Breast epithelium (tissue), 4 donors: ENCODE measurements at regions of chr3 and their contacts with region 1.

Region 1: DNA sequence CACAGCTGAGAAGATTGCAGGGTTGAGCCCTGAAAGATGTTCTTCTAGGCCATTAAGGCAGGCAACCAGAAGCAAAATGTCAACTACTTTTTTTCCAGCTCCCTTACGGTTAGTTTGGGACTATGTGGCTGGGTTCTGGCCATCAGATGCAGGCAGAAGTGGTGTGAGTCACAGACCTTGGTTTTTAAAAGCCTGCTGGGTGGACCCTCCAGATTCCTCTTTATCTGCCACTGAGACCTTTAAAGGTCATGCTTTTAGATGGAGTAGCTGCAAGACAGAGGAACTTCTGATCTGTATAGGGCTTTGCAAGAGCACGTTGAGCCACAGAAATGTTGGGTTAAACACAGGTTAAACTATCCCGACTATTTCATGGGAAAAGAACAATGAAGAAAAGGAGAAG is 102.9 kb downstream of the CHST2 start:
- DNase-seq: no peak
- H3K4me3 ChIP-seq: no peak overlapping the region
- H3K27ac ChIP-seq: no peak overlapping the region
- H3K4me1 ChIP-seq: no peaks in the 10 kb centered on the region
- H3K27me3 ChIP-seq: no peaks in the 10 kb centered on the region
- CTCF ChIP-seq: no peak
- POLR2A ChIP-seq: no peak

Region 2: DNA sequence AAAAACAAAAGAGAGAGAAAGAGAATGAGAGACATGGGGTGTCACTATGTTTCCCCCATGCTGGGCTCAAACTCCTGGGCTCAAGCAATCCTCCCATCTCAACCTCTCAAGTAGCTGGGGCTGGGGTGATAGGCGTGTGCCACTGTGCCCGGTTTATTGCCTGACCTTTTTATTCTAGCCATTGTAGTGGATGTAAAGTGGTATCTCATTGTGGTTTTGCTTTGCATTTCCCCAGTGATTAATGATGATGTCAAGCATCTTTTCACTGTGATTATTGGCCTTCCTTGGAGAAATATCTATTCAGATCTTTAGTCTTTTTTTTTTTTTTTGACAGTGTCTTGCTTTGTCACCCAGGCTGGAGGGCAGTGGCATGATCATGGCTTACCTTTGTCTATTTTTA is 959.4 kb before region 1 on chr3:
- intact Hi-C with region 1: loop called (anchors 5 kb)
- DNase-seq: no peak
- H3K4me3 ChIP-seq: no peak overlapping the region
- H3K27ac ChIP-seq: no peak overlapping the region
- H3K4me1 ChIP-seq: no peaks in the 10 kb centered on the region
- H3K27me3 ChIP-seq: no peaks in the 10 kb centered on the region
- CTCF ChIP-seq: no peak
- POLR2A ChIP-seq: no peak

Region 3: GRCh38 chr3:143266927-143267326 is 44.4 kb after region 1 on chr3:
- intact Hi-C with region 1: no loop called
- DNase-seq: no peak
- H3K4me3 ChIP-seq: no peak overlapping the region
- H3K27ac ChIP-seq: no peak overlapping the region
- H3K4me1 ChIP-seq: peaks cover 0 to 6% of the 10 kb centered on the region in 2 donors
- H3K27me3 ChIP-seq: no peaks in the 10 kb centered on the region
- CTCF ChIP-seq: no peak
- POLR2A ChIP-seq: no peak

Region 4: GRCh38 chr3:143644370-143645089 is 422.0 kb after region 1 on chr3:
- intact Hi-C with region 1: loop called (anchors 10 kb)
- DNase-seq: peak in 1 of 2 donors; percentile 20
- H3K4me3 ChIP-seq: no peak overlapping the region
- H3K27ac ChIP-seq: no peak overlapping the region
- H3K4me1 ChIP-seq: no peaks in the 10 kb centered on the region
- H3K27me3 ChIP-seq: no peaks in the 10 kb centered on the region
- CTCF ChIP-seq: peak in 2 of 3 donors; percentile 41 to 42
- POLR2A ChIP-seq: no peak